GM12878 (cell line): ENCODE measurements at regions of chr11 and their contacts with region 1.

Region 1: DNA sequence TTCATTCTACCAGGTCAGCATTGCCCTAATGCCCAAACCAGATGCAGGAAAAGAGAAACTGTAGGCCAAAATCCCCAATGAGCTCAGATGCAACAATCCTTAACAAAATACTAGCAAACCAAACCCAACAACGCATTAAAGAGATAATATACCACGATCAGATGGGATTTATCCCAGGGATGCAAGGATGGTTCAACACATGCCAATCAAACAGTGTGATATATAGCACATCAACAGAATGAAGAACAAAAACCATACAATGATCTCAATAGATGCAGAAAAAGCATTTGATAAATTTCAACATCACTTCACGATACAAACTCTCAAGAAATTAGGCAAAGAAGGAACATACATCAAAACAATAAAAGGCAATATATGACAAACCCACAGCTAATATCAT is 45.0 kb downstream of the IMMP1L start:
- DNase-seq: no peak
- ATAC-seq: no peak
- H3K4me3 ChIP-seq: no peak overlapping the region
- H3K27ac ChIP-seq: no peak overlapping the region
- H3K4me1 ChIP-seq: no peaks in the 10 kb centered on the region
- H3K27me3 ChIP-seq: no peaks in the 10 kb centered on the region
- CTCF ChIP-seq: no peak
- EP300 ChIP-seq: no peak
- POLR2A ChIP-seq: no peak
- RAD21 ChIP-seq: no peak

Region 2: DNA sequence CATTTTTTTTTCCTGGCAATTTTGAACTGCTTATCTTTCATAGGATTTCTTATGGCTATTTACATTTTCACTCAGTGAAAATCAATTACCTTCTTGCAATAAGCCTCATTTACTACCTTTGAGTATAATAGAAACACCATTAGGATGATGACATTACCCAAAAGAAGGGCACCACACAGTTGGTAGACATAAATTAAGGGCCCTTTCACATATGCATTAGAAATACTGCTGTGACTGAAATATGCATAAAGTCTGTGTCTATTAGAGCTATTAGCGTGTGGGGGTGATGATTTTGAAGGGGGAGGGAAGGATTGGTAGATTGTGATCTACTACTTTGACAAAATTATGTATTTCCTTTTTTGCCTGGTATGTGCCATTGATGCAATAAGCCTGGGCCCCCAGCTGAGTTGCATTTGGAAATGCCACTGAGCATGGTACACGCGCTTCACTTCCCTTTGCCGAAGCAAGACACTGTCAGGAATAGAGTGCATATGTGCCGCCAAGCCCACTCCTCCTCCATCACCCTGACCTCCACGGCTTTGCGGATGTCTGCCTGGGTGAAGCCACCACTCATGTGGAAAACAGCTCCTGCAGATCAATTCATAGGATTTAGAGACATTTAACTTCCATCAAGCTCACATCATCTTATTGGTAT is 434.2 kb before region 1 on chr11:
- CTCF ChIA-PET with region 1: no interaction called
- POLR2A ChIA-PET with region 1: no interaction called
- RAD21 ChIA-PET with region 1: no interaction called
- SMC1A ChIA-PET with region 1: no interaction called
- in situ Hi-C with region 1: no loop called
- intact Hi-C with region 1: no loop called
- DNase-seq: no peak
- ATAC-seq: no peak
- H3K4me3 ChIP-seq: no peak overlapping the region
- H3K27ac ChIP-seq: no peak overlapping the region
- H3K4me1 ChIP-seq: no peaks in the 10 kb centered on the region
- H3K27me3 ChIP-seq: no peaks in the 10 kb centered on the region
- CTCF ChIP-seq: no peak
- EP300 ChIP-seq: no peak
- POLR2A ChIP-seq: no peak
- RAD21 ChIP-seq: no peak

Region 3: DNA sequence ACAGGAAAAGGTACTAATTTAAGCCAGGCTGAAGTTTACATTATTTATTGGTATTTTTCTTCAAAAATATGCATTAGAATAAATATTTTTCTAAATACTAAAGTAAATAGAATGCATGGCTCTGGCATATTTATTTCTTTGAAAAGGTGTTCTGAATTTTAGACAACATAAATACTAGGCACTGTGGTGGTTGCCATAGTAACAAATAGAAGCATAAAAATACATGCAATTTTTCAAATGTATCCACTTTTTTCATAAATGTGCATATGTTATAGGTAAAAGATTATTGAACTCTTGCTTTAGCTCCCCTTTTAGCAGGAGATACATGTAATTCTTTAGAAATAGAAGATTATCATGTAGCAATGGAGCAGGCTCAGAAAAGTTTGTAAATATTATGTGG is 113.3 kb before region 1 on chr11:
- CTCF ChIA-PET with region 1: no interaction called
- POLR2A ChIA-PET with region 1: no interaction called
- RAD21 ChIA-PET with region 1: no interaction called
- SMC1A ChIA-PET with region 1: no interaction called
- in situ Hi-C with region 1: no loop called
- intact Hi-C with region 1: no loop called
- DNase-seq: no peak
- ATAC-seq: no peak
- H3K4me3 ChIP-seq: no peak overlapping the region
- H3K27ac ChIP-seq: no peak overlapping the region
- H3K4me1 ChIP-seq: no peaks in the 10 kb centered on the region
- H3K27me3 ChIP-seq: no peaks in the 10 kb centered on the region
- CTCF ChIP-seq: no peak
- EP300 ChIP-seq: no peak
- POLR2A ChIP-seq: no peak
- RAD21 ChIP-seq: no peak

Region 4: GRCh38 chr11:31477528-31478222 is 13.2 kb after region 1 on chr11:
- CTCF ChIA-PET with region 1: no interaction called
- POLR2A ChIA-PET with region 1: interaction called, 4 read pairs
- RAD21 ChIA-PET with region 1: no interaction called
- SMC1A ChIA-PET with region 1: interaction called, 16 read pairs
- in situ Hi-C with region 1: no loop called
- intact Hi-C with region 1: no loop called
- DNase-seq: no peak
- ATAC-seq: peak; percentile 19; the same call in 2 of the 3 replicates
- H3K4me3 ChIP-seq: no peak overlapping the region
- H3K27ac ChIP-seq: no peak overlapping the region
- H3K4me1 ChIP-seq: no peaks in the 10 kb centered on the region
- H3K27me3 ChIP-seq: no peaks in the 10 kb centered on the region
- CTCF ChIP-seq: no peak
- EP300 ChIP-seq: no peak
- POLR2A ChIP-seq: no peak
- RAD21 ChIP-seq: no peak